ENCODE measurements at regions of chr6 and their contacts with region 1.

Region 1: GRCh38 chr6:26363882-26364701 is 906 bp upstream of the BTN3A2 start:
- DNase-seq: peak; percentile 34
- H3K4me3 Mint-ChIP-seq: no peak overlapping the region
- H3K27ac Mint-ChIP-seq: no peak overlapping the region
- H3K4me1 Mint-ChIP-seq: peaks cover 51% of the 10 kb centered on the region
- H3K27me3 Mint-ChIP-seq: no peaks in the 10 kb centered on the region

Region 2: GRCh38 chr6:26329763-26330511 is 34.2 kb before region 1 on chr6:
- CTCF ChIA-PET with region 1: interaction called, 4 read pairs
- intact Hi-C with region 1: loop called (anchors 2 kb)
- DNase-seq: peak; percentile 81
- H3K4me3 Mint-ChIP-seq: peak overlapping the region; percentile 82
- H3K27ac Mint-ChIP-seq: peak overlapping the region; percentile 90
- H3K4me1 Mint-ChIP-seq: peaks cover 35% of the 10 kb centered on the region
- H3K27me3 Mint-ChIP-seq: peaks cover 28% of the 10 kb centered on the region

Region 3: DNA sequence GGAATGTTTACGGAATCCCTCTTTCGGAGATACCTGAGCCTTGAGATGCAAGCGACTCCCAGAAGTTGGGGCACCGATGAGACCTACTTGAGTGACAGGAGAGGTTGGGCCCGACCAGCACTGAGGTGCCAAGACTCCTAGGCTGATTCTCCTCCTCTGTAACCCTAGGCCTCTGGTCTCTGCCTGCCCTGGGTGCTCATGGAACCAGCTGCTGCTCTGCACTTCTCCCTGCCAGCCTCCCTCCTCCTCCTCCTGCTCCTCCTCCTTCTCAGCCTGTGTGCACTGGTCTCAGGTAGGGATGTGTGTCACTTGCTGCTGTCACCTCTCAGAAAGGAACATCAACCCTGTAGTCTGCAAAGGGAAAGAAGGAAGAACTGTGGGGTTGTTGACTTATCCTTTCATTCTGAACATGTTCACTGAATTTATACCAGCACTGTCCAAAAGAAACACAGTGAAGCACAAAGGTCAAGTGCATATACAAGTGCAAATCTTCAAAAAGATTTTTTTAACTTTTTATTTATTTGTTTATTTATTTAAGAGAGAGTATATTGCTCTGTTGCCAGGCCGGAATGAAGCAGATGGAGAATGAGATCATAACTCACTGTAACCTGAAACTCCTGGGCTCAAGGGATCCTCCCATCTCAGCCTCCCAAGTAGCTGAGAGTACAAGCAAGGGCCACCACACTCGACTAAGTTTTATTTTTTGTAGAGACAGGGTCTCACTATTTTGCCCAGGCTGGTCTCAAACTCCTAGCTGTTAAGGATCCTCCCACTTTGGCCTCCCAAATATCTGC is 19.7 kb after region 1 on chr6:
- CTCF ChIA-PET with region 1: no interaction called
- intact Hi-C with region 1: loop called (anchors 1 kb)
- DNase-seq: peak; percentile 56
- H3K4me3 Mint-ChIP-seq: peak overlapping the region; percentile 97
- H3K27ac Mint-ChIP-seq: peak overlapping the region; percentile 94
- H3K4me1 Mint-ChIP-seq: peaks cover 26% of the 10 kb centered on the region
- H3K27me3 Mint-ChIP-seq: no peaks in the 10 kb centered on the region

Region 4: DNA sequence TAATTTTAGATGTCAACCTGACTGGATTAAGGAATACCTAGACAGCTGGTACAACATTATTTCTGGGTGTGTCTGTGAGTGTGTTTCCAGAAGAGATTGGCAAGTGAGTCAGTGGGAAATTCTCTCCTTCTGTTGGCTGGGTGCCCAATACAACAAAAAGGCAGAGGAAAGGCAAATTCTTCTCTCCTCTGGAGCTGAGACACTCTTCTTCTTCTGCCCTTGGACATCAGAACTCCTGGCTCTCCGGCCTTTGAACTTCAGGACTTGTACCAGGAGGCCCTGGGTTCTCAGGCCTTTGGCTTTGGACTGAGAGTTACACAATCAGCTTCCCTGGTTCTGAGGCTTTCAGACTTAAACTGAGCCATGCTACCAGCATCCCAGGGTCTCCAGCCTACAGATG is 30.2 kb after region 1 on chr6:
- CTCF ChIA-PET with region 1: no interaction called
- intact Hi-C with region 1: no loop called
- DNase-seq: no peak
- H3K4me3 Mint-ChIP-seq: no peak overlapping the region
- H3K27ac Mint-ChIP-seq: no peak overlapping the region
- H3K4me1 Mint-ChIP-seq: no peaks in the 10 kb centered on the region
- H3K27me3 Mint-ChIP-seq: no peaks in the 10 kb centered on the region